ENCODE measurements at regions of chr7 and their contacts with region 1.

Region 1: GRCh38 chr7:2886900-2887299 is 42.8 kb upstream of the GNA12 start:
- DNase-seq: peak; percentile 68
- H3K4me3 ChIP-seq: no peak overlapping the region
- H3K27ac ChIP-seq: no peak overlapping the region
- H3K4me1 ChIP-seq: peaks cover 4% of the 10 kb centered on the region
- H3K27me3 ChIP-seq: peaks cover 3% of the 10 kb centered on the region
- CTCF ChIP-seq: peak; percentile 95

Region 2: DNA sequence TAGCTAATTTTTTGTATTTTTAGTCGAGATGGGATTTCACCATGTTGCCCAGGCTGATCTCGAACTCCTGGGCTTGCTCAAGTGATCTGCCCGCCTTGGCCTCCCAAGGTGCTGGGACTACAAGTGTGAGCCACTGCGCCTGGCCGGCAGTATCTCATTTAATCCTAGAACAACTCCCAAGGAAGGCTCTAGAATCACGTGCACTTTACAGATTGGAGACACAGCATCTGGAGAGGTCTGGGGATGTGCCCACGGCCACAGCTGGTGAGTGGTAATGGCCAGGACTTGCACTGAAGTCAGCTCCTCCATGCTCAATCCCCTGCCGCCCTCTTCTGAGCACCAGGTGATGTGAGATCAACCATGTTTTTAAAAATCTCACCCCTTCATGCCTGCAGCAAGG is 113.7 kb after region 1 on chr7:
- CTCF ChIA-PET with region 1: no interaction called
- dilution Hi-C with region 1: no loop called
- in situ Hi-C with region 1: no loop called
- intact Hi-C with region 1: loop called (anchors 5 kb)
- DNase-seq: no peak
- H3K4me3 ChIP-seq: no peak overlapping the region
- H3K27ac ChIP-seq: no peak overlapping the region
- H3K4me1 ChIP-seq: no peaks in the 10 kb centered on the region
- H3K27me3 ChIP-seq: no peaks in the 10 kb centered on the region
- CTCF ChIP-seq: peak in 1 of 2 donors; percentile 2

Region 3: GRCh38 chr7:3146571-3147226 is 259.8 kb after region 1 on chr7:
- CTCF ChIA-PET with region 1: no interaction called
- dilution Hi-C with region 1: no loop called
- in situ Hi-C with region 1: loop called in 1 of 2 experiments (anchors 10 kb)
- intact Hi-C with region 1: no loop called
- DNase-seq: peak; percentile 2
- H3K4me3 ChIP-seq: no peak overlapping the region
- H3K27ac ChIP-seq: no peak overlapping the region
- H3K4me1 ChIP-seq: no peaks in the 10 kb centered on the region
- H3K27me3 ChIP-seq: no peaks in the 10 kb centered on the region
- CTCF ChIP-seq: no peak

Region 4: DNA sequence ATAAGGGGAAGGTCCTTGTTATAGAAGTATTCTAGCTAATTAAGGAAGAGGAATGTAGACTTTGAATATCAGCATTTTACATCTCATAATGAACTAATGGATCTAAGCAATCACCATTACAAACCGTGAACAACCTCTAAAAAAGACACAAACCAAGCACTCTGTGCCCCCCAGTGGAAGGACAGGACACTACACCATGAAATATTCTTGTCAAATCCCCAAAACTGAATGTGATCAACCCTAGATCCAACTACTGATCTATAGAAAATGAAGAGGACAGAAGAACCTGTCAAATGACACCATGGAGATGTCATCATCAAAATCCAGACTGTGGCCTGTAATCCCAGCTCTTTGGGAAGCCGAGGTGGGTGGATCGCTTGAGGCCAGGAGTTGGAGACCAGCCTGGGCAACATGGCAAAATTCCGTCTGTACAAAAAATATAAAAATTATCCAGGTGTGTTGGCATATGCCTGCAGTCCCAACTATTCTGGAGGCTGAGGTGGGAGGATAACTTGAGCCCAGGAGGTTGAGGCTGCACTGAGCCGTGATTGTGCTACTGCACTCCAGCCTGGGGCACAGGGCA is 268.1 kb after region 1 on chr7:
- CTCF ChIA-PET with region 1: no interaction called
- dilution Hi-C with region 1: no loop called
- in situ Hi-C with region 1: no loop called
- intact Hi-C with region 1: loop called (anchors 1 kb)
- DNase-seq: peak; percentile 46
- H3K4me3 ChIP-seq: no peak overlapping the region
- H3K27ac ChIP-seq: no peak overlapping the region
- H3K4me1 ChIP-seq: no peaks in the 10 kb centered on the region
- H3K27me3 ChIP-seq: no peaks in the 10 kb centered on the region
- CTCF ChIP-seq: peak; percentile 66 to 74

Region 5: DNA sequence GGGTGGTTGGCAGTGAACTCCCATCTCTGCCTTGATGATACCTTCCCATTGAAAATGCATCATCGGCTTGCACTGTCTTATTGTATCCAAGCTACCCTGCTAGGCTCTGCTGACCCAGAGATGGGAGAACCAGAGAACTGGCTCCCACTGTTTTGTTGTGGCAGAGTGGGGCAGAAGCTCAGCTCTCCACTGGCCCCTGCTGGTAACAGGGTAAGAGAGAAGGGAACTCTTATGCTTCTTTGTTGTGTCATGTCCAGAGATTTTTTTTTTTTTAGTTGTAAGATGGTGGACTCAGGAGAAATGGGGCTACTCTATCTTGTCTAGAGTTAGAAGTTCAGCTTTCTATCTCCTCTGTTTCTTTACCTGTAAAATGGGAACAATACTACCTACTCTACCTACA is 313.6 kb after region 1 on chr7:
- CTCF ChIA-PET with region 1: no interaction called
- dilution Hi-C with region 1: no loop called
- in situ Hi-C with region 1: no loop called
- intact Hi-C with region 1: loop called (anchors 1 kb)
- DNase-seq: peak; percentile 23
- H3K4me3 ChIP-seq: no peak overlapping the region
- H3K27ac ChIP-seq: no peak overlapping the region
- H3K4me1 ChIP-seq: no peaks in the 10 kb centered on the region
- H3K27me3 ChIP-seq: no peaks in the 10 kb centered on the region
- CTCF ChIP-seq: peak in 1 of 2 donors; percentile 31

Measured in mammary epithelial cell (primary cell).